Esophagus muscularis mucosa (tissue), 4 donors: ENCODE measurements at regions of chr22 and their contacts with region 1.

Region 1: DNA sequence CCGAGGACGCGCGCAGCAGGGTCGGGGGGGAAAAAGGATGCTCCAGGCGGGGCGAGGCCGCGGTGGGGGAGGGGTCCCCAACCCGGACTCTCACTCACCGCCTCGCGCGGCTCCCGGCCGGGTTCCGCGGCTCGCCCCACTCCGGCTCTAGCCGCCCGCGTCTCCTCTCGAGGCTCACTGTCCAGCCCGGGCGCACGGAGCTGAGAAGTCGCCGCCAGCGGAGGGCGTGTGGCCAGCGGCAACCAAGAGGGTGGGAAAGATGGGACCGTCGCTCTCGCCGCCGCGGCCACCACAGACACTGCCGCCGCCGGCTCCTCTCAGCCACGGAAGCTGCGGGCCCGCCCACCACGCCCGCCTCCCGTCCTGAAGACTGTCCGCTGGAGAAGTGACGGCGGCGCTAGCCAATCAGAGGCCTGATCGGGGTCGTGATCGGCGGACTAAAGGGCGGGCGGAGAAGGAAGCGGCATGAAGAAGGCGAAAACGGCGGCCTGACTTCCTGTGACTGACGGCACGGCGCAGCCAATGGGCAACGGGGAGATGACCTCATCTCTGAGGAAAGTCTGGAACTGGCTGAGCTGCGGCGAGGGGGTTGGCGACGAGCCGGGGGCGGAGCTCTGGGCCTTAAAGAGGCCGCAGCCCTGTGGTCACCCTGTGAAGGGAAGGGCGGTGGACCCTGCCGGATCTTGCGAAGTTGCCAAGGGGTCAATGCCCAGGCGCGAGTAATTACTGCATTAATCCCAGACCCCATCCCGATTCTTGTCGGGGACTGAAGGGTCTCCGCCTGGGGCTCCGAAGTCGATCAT is at the start of gene MRTFA:
- DNase-seq: peak; percentile 100
- H3K4me3 ChIP-seq: peak within 1 kb of the TSS; percentile 74 to 90 (median 82)
- H3K27ac ChIP-seq: peak within 1 kb of the TSS; percentile 92 to 96 (median 93)
- H3K4me1 ChIP-seq: peaks cover 15 to 53% (median 43%) of the 10 kb centered on the region in 4 donors
- H3K27me3 ChIP-seq: no peaks in the 10 kb centered on the region
- CTCF ChIP-seq: no peak
- EP300 ChIP-seq: peak; percentile 16
- POLR2A ChIP-seq: peak; percentile 98
- total RNA-seq, gene MRTFA: 55.6 to 88.7 (median 73.6) TPM

Region 2: DNA sequence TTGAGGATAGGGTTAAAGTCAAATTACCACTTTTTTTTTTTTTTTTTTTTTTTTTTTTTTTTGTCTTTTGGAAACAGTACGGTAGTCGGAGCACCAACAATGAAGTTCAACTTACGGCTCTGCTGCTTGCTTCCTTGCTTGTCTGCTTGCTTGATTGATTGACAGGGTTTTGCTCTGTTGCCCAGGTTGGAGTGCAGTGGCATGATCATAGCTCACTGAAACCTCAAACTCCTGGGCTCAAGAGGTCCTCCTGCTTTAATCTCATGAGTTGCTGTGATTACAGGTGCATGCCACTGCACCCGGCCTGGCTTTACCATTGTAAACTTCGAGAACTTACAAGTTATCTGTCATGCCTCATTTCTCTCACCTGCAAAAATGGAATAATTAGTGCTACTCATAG is 260.4 kb before region 1 on chr22:
- intact Hi-C with region 1: loop called (anchors 10 kb)
- DNase-seq: no peak
- H3K4me3 ChIP-seq: no peak overlapping the region
- H3K27ac ChIP-seq: no peak overlapping the region
- H3K4me1 ChIP-seq: peaks cover 0 to 21% (median 17%) of the 10 kb centered on the region in 4 donors
- H3K27me3 ChIP-seq: no peaks in the 10 kb centered on the region
- CTCF ChIP-seq: no peak
- EP300 ChIP-seq: no peak
- POLR2A ChIP-seq: no peak

Region 3: DNA sequence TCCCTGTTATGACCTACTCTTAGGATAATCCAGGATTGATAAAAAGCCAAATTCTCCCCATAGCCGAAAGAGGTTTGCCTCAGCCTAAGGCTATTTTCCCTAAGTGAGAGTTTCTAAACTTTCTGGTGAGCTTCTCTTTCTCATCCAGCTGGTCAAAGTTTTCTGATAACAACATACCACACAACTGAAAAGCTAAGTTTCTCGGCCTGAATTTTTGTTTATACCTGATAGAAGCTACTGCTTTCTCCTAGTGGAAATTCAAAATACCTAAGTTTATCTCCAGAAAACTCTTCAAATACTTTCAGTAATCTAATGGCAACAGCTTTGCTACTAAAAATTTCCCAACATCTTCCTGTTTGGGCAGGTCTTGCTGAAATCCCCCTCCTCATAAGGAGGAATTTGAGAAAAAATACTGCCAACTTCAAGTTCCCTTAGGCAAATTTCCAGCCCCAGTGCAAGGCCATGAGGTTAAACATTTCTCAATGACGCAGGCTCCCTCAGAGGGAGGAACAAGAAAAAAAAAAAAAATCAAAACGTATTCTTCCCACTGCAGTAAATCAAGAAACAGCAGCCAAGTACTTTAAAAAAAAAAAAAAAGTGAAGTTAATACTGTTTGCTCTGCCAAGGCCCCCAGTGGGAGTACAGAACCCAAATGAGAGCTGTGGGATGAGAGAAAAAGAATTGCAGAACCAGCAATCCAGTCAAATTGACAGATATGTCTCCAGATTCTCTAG is 127.0 kb before region 1 on chr22:
- intact Hi-C with region 1: loop called (anchors 5 kb)
- DNase-seq: no peak
- H3K4me3 ChIP-seq: no peak overlapping the region
- H3K27ac ChIP-seq: peak overlapping the region; percentile 77 to 82 (median 77)
- H3K4me1 ChIP-seq: peaks cover 66 to 71% (median 69%) of the 10 kb centered on the region in 4 donors
- H3K27me3 ChIP-seq: no peaks in the 10 kb centered on the region
- CTCF ChIP-seq: no peak
- EP300 ChIP-seq: no peak
- POLR2A ChIP-seq: no peak